Posterior vena cava (tissue), 2 donors: ENCODE measurements at regions of chr20 and their contacts with region 1.

Region 1: DNA sequence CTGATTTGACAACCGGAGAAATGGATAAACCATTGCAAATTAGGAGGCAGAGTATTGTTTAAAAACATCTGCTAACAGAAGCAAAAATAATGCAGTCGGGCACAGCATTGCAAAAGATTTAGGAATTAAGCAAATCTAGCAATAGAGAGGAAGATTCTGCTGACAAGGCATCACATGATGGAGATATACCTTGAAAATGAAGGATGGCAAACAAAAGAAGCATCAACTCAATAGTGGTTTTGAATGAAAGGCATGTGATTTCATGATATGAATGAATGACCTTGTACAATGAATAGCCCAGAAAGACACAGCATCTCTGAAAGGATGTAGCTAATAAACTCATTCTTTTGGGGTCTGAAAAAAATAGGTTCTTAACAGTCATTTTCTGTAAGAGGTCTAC is 8.6 kb upstream of the RBM39 start:
- DNase-seq: no peak

Region 2: GRCh38 chr20:35718972-35719635 is 31.5 kb before region 1 on chr20:
- intact Hi-C with region 1: no loop called
- DNase-seq: no peak

Region 3: GRCh38 chr20:35907017-35907701 is 156.5 kb after region 1 on chr20:
- intact Hi-C with region 1: no loop called
- DNase-seq: no peak

Region 4: GRCh38 chr20:36760647-36761046 is 1010.0 kb after region 1 on chr20:
- intact Hi-C with region 1: loop called in 1 of 2 experiments (anchors 5 kb)
- DNase-seq: no peak